Activated CD4-positive, alpha-beta memory T cell treated with anti-CD3 and anti-CD28 coated beads for 36 hours (primary cell): ENCODE measurements at regions of chr14 and their contacts with region 1.

Region 1: GRCh38 chr14:22314181-22314820 is 274.7 kb downstream of the DAD1 start:
- DNase-seq: no peak
- H3K4me3 Mint-ChIP-seq: peak overlapping the region; percentile 29
- H3K27ac Mint-ChIP-seq: peak overlapping the region; percentile 77
- H3K4me1 Mint-ChIP-seq: no peaks in the 10 kb centered on the region
- H3K27me3 Mint-ChIP-seq: no peaks in the 10 kb centered on the region

Region 2: DNA sequence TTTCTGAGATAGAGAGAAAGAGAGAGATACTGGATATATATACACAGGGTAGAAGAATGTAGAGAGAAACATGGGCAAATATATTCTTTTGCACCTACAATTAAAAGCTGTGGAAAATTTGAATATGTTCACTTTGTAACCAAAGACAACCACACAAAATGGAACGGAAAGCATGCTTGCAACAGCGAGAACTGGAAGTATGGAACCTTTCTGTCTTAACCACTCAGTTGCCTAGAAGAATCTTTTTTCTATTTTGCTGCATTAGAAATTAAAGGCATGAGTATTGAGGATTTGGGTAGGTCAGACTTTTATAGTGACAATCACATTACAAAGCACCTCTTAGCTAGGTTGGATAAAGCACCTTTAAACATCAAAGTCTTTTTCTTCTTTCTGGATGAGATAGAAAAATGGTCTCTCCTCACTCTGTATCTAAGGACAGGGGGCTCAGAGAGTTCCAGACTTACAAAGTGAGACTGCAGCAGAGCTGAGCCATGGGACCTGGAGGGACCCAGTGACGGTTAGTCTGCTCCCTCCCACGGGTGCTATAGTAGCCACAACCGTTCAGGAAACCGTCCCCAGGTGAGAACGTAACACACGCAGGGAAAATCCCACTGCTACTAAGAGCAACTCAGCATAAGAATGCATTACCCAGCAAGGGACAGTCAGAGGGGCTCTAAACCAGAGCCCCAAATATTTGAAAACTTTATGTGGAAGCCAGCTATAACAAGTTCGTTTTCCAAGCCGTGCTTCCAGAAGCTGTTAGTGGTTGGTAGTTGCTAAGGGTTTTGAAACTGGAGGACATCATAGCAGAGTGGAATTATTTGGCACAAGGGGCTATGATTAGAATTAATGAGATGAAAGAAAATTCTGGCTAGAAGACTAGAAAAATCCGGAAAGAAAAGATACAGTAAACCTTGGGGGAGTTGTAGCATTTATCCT is 177.7 kb after region 1 on chr14:
- CTCF ChIA-PET with region 1: no interaction called
- POLR2A ChIA-PET with region 1: no interaction called
- intact Hi-C with region 1: loop called (anchors 10 kb)
- DNase-seq: peak; percentile 56
- H3K4me3 Mint-ChIP-seq: peak overlapping the region; percentile 87
- H3K27ac Mint-ChIP-seq: peak overlapping the region; percentile 98
- H3K4me1 Mint-ChIP-seq: peaks cover 2% of the 10 kb centered on the region
- H3K27me3 Mint-ChIP-seq: no peaks in the 10 kb centered on the region

Region 3: DNA sequence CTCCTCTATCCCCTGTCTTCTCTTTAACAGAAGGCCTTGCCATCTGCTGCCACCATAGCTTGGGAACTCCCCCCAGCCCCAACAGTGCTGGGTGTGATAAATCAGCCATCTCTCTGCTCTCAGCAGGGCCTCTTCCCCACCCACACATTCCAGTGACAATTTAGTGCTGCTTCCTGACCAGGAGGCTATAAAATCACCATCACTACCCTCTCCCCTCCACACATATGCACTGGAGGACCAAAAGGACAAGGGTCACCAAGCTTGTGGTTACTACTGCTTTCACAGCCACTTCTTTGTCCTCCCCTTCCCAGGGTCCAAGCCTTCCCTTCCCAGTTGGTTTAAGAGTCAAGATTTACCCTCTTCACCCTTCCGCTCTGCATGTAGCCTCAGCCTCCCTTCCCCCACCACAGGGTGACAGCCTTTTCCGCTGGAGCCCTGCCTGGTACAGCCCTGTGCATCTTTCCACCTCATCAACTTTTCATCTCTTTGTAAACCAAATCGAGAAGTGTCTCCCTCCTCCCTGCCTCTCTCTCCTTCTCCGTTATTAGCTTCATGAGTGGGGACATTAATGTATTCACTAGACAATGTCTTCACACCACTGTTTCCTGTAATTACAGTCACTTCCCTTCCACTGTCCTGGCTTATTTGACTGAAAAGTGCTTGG is 711.0 kb after region 1 on chr14:
- CTCF ChIA-PET with region 1: no interaction called
- POLR2A ChIA-PET with region 1: no interaction called
- intact Hi-C with region 1: no loop called
- DNase-seq: peak; percentile 53
- H3K4me3 Mint-ChIP-seq: peak overlapping the region; percentile 9
- H3K27ac Mint-ChIP-seq: peak overlapping the region; percentile 81
- H3K4me1 Mint-ChIP-seq: peaks cover 47% of the 10 kb centered on the region
- H3K27me3 Mint-ChIP-seq: no peaks in the 10 kb centered on the region